ENCODE measurements at regions of chr6 and their contacts with region 1.

Region 1: GRCh38 chr6:41367700-41368099 is 32.3 kb downstream of the NCR2 start:
- DNase-seq: peak; percentile 78
- ATAC-seq: peak; percentile 94
- H3K4me3 ChIP-seq: no peak overlapping the region
- H3K27ac ChIP-seq: no peak overlapping the region
- H3K4me1 ChIP-seq: peaks cover 8% of the 10 kb centered on the region
- H3K27me3 ChIP-seq: peaks cover 0 to 15% of the 10 kb centered on the region in 2 experiments; a peak in 4 of 5 replicates
- CTCF ChIP-seq: peak; percentile 98
- EP300 ChIP-seq: no peak
- POLR2A ChIP-seq: no peak
- RAD21 ChIP-seq: peak; percentile 94

Region 2: GRCh38 chr6:41424370-41425058 is 56.8 kb after region 1 on chr6:
- CTCF ChIA-PET with region 1: interaction called, 12 read pairs
- POLR2A ChIA-PET with region 1: no interaction called
- in situ Hi-C with region 1: no loop called
- intact Hi-C with region 1: loop called (anchors 1 kb)
- DNase-seq: peak; percentile 70
- ATAC-seq: peak; percentile 57
- H3K4me3 ChIP-seq: no peak overlapping the region
- H3K27ac ChIP-seq: no peak overlapping the region
- H3K4me1 ChIP-seq: peaks cover 40% of the 10 kb centered on the region
- H3K27me3 ChIP-seq: peaks cover 3 to 53% of the 10 kb centered on the region in 2 experiments; a peak in 4 of 5 replicates
- CTCF ChIP-seq: peak; percentile 92
- EP300 ChIP-seq: no peak
- POLR2A ChIP-seq: no peak
- RAD21 ChIP-seq: peak; percentile 42; the same call in 1 of the 2 replicates

Region 3: DNA sequence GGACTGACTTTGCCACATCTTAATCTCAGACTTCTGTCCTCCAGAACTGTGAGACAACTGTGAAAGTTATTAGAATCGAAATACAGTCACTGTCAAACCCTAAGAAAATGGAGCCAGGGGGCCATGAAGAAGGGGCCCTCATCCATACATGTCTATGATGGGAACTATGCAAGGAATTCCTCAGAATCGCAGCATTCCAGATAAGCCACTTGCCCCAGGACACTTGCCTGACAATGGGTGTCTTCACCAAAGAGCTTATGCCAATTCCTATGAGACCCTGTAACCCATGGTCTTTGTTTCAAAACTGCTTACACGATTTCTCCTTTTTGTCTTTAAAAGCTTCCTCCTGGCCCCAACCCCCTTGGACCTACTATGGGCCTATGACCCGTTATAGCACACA is 88.1 kb after region 1 on chr6:
- CTCF ChIA-PET with region 1: interaction called, 7 read pairs
- POLR2A ChIA-PET with region 1: no interaction called
- in situ Hi-C with region 1: loop called (anchors 5 kb)
- intact Hi-C with region 1: loop called (anchors 1 kb)
- DNase-seq: no peak
- ATAC-seq: no peak
- H3K4me3 ChIP-seq: no peak overlapping the region
- H3K27ac ChIP-seq: no peak overlapping the region
- H3K4me1 ChIP-seq: peaks cover 90% of the 10 kb centered on the region
- H3K27me3 ChIP-seq: peaks cover 10 to 36% of the 10 kb centered on the region in 2 experiments; a peak in 4 of 5 replicates
- CTCF ChIP-seq: no peak
- EP300 ChIP-seq: no peak
- POLR2A ChIP-seq: no peak
- RAD21 ChIP-seq: no peak

Region 4: DNA sequence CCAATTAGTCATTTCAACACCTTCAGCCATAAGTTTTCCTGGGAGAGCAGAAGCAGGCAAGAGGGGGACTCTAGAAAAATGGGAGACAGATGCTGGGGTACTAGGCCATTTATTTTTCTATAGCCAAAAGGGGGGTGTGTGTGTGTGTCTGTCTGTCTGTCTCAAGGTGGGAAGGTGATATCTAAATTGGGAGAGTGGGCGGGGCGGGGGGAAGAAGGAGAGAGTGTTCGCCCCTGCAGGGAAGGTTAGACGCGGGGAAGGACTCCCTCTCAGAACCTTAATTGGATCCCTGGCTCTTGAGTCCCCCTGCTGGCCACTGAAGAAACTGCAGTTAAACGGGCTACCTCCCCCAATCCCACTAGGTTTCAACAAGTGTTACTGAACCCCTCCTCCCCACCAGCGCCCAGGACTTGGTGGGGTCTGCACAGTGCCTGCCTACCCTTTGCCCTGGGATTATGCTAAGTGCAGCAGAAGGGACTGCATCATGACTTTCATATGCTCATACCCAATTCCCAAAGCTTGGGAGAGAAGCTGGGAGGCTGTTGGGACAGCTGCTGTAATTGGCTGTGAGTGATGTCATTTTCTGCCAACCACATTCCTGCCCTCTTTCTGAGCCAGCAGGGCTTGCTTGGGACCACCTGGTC is 224.3 kb after region 1 on chr6:
- CTCF ChIA-PET with region 1: interaction called, 43 read pairs
- POLR2A ChIA-PET with region 1: no interaction called
- in situ Hi-C with region 1: loop called (anchors 5 kb)
- intact Hi-C with region 1: loop called (anchors 1 kb)
- DNase-seq: peak; percentile 65
- ATAC-seq: peak; percentile 73
- H3K4me3 ChIP-seq: no peak overlapping the region
- H3K27ac ChIP-seq: no peak overlapping the region
- H3K4me1 ChIP-seq: peaks cover 19% of the 10 kb centered on the region
- H3K27me3 ChIP-seq: no peaks in the 10 kb centered on the region
- CTCF ChIP-seq: peak; percentile 95
- EP300 ChIP-seq: no peak
- POLR2A ChIP-seq: no peak
- RAD21 ChIP-seq: peak; percentile 97

Region 5: DNA sequence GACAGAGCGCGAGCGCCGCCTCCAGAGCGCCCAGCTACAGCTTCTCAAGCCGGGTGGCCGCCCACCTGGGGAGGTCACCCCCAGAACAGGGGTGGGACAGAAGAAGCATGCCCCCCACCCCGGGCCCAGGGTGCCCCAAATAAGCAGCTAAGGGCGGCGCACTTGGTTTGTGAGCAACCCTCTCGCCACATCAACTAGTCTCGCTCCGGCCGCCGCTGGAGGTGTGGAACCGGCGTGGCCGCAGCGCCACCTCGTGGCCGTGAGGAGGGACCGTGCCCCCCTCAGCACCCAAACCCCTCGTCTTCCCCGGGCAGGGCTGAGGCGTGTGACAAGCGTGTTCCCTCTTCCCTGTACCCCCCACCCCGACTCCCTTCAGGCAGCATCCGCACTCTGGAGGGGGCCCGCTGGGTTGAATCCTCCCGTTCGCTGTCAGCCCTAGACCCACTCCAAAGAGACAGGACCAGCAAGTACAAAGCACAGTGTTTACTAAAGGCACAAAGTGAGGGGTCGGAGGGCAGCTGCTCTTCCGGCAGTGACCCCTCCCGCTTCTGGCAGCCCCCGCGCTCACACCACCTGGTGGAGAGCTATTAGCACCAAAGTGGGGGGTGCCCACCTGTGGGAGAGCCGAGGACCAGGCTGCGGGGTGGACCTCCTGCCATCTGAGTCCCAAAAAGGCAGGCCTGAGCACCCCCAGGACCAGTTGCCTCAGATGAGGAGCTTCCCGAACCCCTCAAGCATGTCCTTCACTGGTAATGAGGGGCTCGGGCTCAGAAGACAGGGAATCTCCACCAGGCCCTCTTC is 316.0 kb after region 1 on chr6:
- CTCF ChIA-PET with region 1: interaction called, 154 read pairs
- POLR2A ChIA-PET with region 1: no interaction called
- in situ Hi-C with region 1: loop called (anchors 5 kb)
- intact Hi-C with region 1: loop called (anchors 1 kb)
- DNase-seq: peak; percentile 57
- ATAC-seq: peak; percentile 87
- H3K4me3 ChIP-seq: peak overlapping the region in 2 of 3 experiments; percentile 36 to 60; a peak in 4 of 6 replicates
- H3K27ac ChIP-seq: no peak overlapping the region
- H3K4me1 ChIP-seq: peaks cover 26% of the 10 kb centered on the region
- H3K27me3 ChIP-seq: peaks cover 7 to 23% of the 10 kb centered on the region in 2 experiments; a peak in 3 of 5 replicates
- CTCF ChIP-seq: peak; percentile 100
- EP300 ChIP-seq: no peak
- POLR2A ChIP-seq: no peak
- RAD21 ChIP-seq: peak; percentile 97